Dendritic cell treated with granulocyte-macrophage colony-stimulating factor and Interleukin-4, amounts not matched to agents 40 ng/mL and 50 ng/mL, for 4 days (primary cell): ENCODE measurements at regions of chr2 and their contacts with region 1.

Region 1: GRCh38 chr2:222707689-222708525 is 36.4 kb downstream of the MOGAT1 start:
- H3K4me3 Mint-ChIP-seq: no peak overlapping the region
- H3K27ac Mint-ChIP-seq: peak overlapping the region; percentile 74
- H3K4me1 Mint-ChIP-seq: peaks cover 29% of the 10 kb centered on the region
- H3K27me3 Mint-ChIP-seq: no peaks in the 10 kb centered on the region

Region 2: GRCh38 chr2:222743251-222743812 is 35.4 kb after region 1 on chr2:
- intact Hi-C with region 1: no loop called
- H3K4me3 Mint-ChIP-seq: peak overlapping the region; percentile 21
- H3K27ac Mint-ChIP-seq: peak overlapping the region; percentile 66
- H3K4me1 Mint-ChIP-seq: peaks cover 35% of the 10 kb centered on the region
- H3K27me3 Mint-ChIP-seq: no peaks in the 10 kb centered on the region

Region 3: GRCh38 chr2:222805541-222806304 is 97.8 kb after region 1 on chr2:
- intact Hi-C with region 1: loop called (anchors 5 kb)
- H3K4me3 Mint-ChIP-seq: no peak overlapping the region
- H3K27ac Mint-ChIP-seq: peak overlapping the region; percentile 67
- H3K4me1 Mint-ChIP-seq: peaks cover 30% of the 10 kb centered on the region
- H3K27me3 Mint-ChIP-seq: no peaks in the 10 kb centered on the region

Region 4: GRCh38 chr2:222844323-222844722 is 136.4 kb after region 1 on chr2:
- intact Hi-C with region 1: loop called (anchors 5 kb)
- H3K4me3 Mint-ChIP-seq: peak overlapping the region; percentile 26
- H3K27ac Mint-ChIP-seq: peak overlapping the region; percentile 91
- H3K4me1 Mint-ChIP-seq: peaks cover 72% of the 10 kb centered on the region
- H3K27me3 Mint-ChIP-seq: no peaks in the 10 kb centered on the region

Region 5: GRCh38 chr2:222860740-222861410 is 153.0 kb after region 1 on chr2 and contains the start of gene ACSL3:
- intact Hi-C with region 1: loop called (anchors 2 kb)
- H3K4me3 Mint-ChIP-seq: peak within 1 kb of the TSS; percentile 20
- H3K27ac Mint-ChIP-seq: no peak within 1 kb of the TSS
- H3K4me1 Mint-ChIP-seq: peaks cover 15% of the 10 kb centered on the region
- H3K27me3 Mint-ChIP-seq: no peaks in the 10 kb centered on the region

Region 6: DNA sequence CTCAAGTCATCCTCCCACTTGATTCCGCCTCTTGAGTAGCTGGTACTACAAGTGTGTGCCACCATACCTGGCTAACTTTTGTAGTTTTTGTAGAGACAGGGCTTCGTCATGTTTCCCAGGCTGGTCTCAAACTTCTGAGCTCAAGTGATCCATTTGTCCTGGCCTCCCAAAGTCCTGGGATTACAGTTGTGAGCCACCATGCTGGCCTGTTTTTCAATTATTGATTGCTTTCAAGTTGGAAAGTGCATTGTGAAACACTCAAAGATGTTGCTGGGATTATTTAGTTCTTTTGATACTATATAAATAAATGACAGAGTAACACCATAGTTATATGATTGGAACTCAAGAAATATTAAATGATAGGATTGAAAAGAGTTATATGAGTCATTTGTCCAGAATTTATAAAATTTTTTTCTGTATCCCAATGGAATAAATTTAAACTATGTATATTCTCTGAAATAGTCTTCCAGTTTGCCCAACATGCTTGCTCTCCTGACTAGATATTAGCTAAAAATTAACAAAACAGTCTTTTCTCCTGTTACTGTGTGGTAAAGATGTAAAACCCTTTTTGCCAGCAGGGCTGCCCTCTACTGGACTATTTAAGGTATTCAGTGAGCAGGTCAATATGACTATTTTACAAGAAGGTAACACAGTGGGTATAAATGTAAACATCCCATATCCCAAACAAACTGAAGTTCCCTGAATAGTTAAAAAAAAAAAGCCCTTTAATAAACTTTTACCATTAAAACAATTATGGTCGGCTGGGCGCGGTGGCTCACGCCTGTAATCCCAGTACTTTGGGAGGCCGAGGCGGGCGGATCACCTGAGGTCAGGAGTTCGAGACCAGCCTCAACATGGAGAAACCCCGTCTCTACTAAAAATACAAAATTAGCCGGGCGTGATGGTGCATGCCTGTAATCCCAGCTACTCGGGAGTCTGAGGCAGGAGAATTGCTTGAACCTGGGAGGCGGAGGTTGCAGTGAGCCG is 195.6 kb after region 1 on chr2:
- intact Hi-C with region 1: loop called (anchors 1 kb)
- H3K4me3 Mint-ChIP-seq: no peak overlapping the region
- H3K27ac Mint-ChIP-seq: no peak overlapping the region
- H3K4me1 Mint-ChIP-seq: peaks cover 34% of the 10 kb centered on the region
- H3K27me3 Mint-ChIP-seq: no peaks in the 10 kb centered on the region